ENCODE measurements at regions of chr6 and their contacts with region 1.

Region 1: DNA sequence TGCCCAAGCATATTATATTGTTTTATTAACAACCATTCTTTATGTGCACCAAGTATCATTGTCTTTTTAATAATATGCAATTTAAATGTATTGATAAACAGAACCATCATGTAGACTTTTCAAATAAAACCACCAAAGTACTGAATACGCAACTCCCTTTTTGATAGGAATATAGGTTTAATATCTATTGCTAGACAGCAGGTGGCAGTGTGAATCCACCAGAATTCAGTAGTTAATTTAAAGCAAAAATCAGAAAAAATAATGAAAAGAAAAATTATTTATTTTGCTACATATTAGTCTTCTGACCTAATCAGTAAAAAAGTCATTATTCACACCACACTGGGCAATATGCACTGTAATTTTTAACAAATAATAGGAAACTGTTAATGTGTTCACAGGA is 143.7 kb downstream of the KLHL32 start:
- DNase-seq: peak; percentile 27 to 40
- H3K4me3 ChIP-seq: no peak overlapping the region
- H3K4me1 ChIP-seq: no peaks in the 10 kb centered on the region
- H3K27me3 ChIP-seq: peaks cover 3% of the 10 kb centered on the region

Region 2: GRCh38 chr6:96907498-96907897 is 160.7 kb before region 1 on chr6:
- in situ Hi-C with region 1: loop called (anchors 10 kb)
- DNase-seq: no peak
- H3K4me3 ChIP-seq: no peak overlapping the region
- H3K4me1 ChIP-seq: no peaks in the 10 kb centered on the region
- H3K27me3 ChIP-seq: no peaks in the 10 kb centered on the region; the same call in 1 of the 2 replicates

Measured in HAP-1 (cell line).